ENCODE measurements at regions of chr7 and their contacts with region 1.

Region 1: DNA sequence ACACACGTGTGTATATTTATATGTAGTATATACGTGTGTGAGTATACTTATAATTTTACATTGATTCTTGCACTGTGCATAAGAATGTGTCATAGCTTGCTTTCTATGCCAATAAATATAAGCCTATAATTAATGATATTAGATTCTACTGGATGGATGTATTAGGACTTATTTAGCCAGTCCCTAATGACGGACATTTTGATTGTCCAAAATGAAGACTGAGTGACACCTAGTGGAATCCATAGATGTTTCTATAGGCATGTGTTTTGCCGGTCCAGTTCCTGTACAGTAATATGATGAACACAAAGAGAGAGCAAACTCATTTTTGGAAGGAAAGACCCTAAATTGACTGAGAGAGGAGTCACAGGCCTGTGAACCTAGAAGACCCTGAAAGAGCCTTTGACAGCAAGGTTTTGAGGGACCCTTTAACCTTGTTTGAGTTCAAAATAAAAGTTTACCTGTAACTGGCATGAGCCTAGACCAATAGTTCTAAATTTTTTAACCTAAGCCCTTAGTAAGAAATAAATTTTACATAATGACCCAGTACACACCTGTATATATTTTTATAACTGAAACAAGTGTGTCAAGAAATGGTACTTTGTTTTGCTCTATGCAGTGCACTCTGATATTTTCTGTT is 42.4 kb upstream of the AGBL3 start:
- DNase-seq: peak; percentile 57
- ATAC-seq: peak; percentile 73
- H3K4me3 ChIP-seq: no peak overlapping the region
- H3K27ac ChIP-seq: no peak overlapping the region
- H3K4me1 ChIP-seq: peaks cover 51% of the 10 kb centered on the region
- H3K27me3 ChIP-seq: no peaks in the 10 kb centered on the region
- CTCF ChIP-seq: peak; percentile 69
- EP300 ChIP-seq: no peak
- POLR2A ChIP-seq: no peak
- RAD21 ChIP-seq: peak; percentile 78

Region 2: DNA sequence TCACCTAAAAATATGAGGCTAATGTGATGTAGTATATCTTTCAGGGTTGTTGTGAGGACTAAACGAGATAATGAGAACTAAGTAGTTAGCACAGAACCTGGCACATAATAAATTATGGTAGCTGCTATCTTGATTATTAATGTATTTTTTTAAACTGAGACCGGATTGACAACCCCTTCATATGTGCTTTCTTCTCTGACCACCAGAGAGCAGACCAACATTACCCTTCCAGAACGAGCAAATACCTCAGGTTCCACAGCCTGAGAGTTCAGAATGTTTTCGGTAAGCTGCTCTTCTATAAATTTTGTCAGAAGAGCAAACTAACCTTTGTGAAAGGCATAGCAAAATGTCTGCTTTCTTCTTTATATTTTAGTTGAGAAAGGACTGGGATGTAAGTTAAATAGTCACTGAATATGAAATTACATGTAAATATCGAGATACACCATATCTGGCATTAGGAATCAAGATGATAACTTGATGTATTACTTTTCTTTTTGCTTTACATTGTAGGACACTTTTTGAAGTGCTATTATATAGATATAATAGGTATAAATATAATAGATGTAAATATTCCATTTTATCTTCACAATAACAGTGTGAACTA is 310.8 kb before region 1 on chr7:
- CTCF ChIA-PET with region 1: interaction called, 8 read pairs
- POLR2A ChIA-PET with region 1: no interaction called
- in situ Hi-C with region 1: no loop called
- intact Hi-C with region 1: loop called (anchors 2 kb)
- DNase-seq: peak; percentile 44
- ATAC-seq: peak; percentile 82
- H3K4me3 ChIP-seq: no peak overlapping the region
- H3K27ac ChIP-seq: no peak overlapping the region
- H3K4me1 ChIP-seq: no peaks in the 10 kb centered on the region
- H3K27me3 ChIP-seq: no peaks in the 10 kb centered on the region
- CTCF ChIP-seq: peak; percentile 69
- EP300 ChIP-seq: no peak
- POLR2A ChIP-seq: no peak
- RAD21 ChIP-seq: peak; percentile 52; the same call in 1 of the 2 replicates

Region 3: DNA sequence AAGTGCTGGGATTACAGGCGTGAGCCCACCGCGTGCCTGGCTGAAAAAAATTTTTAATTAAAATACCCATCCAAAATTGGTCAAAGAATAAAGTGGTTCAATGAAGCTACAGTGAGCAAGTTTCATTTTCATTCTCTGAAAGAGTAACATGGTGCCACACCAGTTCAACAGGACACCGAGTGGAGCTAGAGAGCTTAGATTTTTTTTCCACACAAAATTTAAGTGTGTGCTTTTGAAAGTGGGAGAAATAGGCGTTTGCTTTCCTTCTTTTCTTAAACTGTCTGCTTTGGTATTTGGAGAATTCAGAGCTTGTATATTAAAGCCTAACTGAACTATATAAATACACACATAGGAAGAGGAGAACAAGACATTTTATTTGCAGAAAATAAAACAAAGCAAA is 253.9 kb before region 1 on chr7:
- CTCF ChIA-PET with region 1: no interaction called
- POLR2A ChIA-PET with region 1: no interaction called
- in situ Hi-C with region 1: no loop called
- intact Hi-C with region 1: loop called (anchors 2 kb)
- DNase-seq: no peak
- ATAC-seq: peak; percentile 68
- H3K4me3 ChIP-seq: no peak overlapping the region
- H3K27ac ChIP-seq: no peak overlapping the region
- H3K4me1 ChIP-seq: peaks cover 28% of the 10 kb centered on the region
- H3K27me3 ChIP-seq: peaks cover 0 to 3% of the 10 kb centered on the region in 2 experiments; a peak in 2 of 5 replicates
- CTCF ChIP-seq: peak; percentile 46; the same call in 1 of the 2 replicates
- EP300 ChIP-seq: no peak
- POLR2A ChIP-seq: no peak
- RAD21 ChIP-seq: no peak

Region 4: GRCh38 chr7:134724606-134725005 is 219.3 kb before region 1 on chr7:
- CTCF ChIA-PET with region 1: interaction called, 3 read pairs
- POLR2A ChIA-PET with region 1: no interaction called
- in situ Hi-C with region 1: no loop called
- intact Hi-C with region 1: loop called (anchors 10 kb)
- DNase-seq: peak; percentile 10
- ATAC-seq: peak; percentile 82
- H3K4me3 ChIP-seq: no peak overlapping the region
- H3K27ac ChIP-seq: no peak overlapping the region
- H3K4me1 ChIP-seq: peaks cover 11% of the 10 kb centered on the region
- H3K27me3 ChIP-seq: peaks cover 1 to 4% of the 10 kb centered on the region in 2 experiments; a peak in 1 of 5 replicates
- CTCF ChIP-seq: peak; percentile 60
- EP300 ChIP-seq: no peak
- POLR2A ChIP-seq: no peak
- RAD21 ChIP-seq: no peak

Region 5: GRCh38 chr7:134750083-134751062 is 193.5 kb before region 1 on chr7:
- CTCF ChIA-PET with region 1: no interaction called
- POLR2A ChIA-PET with region 1: no interaction called
- in situ Hi-C with region 1: no loop called
- intact Hi-C with region 1: loop called (anchors 5 kb)
- DNase-seq: peak; percentile 27
- ATAC-seq: peak; percentile 94
- H3K4me3 ChIP-seq: no peak overlapping the region
- H3K27ac ChIP-seq: no peak overlapping the region
- H3K4me1 ChIP-seq: no peaks in the 10 kb centered on the region
- H3K27me3 ChIP-seq: no peaks in the 10 kb centered on the region; a peak in 1 of 5 replicates
- CTCF ChIP-seq: peak; percentile 83
- EP300 ChIP-seq: no peak
- POLR2A ChIP-seq: no peak
- RAD21 ChIP-seq: no peak

Region 6: DNA sequence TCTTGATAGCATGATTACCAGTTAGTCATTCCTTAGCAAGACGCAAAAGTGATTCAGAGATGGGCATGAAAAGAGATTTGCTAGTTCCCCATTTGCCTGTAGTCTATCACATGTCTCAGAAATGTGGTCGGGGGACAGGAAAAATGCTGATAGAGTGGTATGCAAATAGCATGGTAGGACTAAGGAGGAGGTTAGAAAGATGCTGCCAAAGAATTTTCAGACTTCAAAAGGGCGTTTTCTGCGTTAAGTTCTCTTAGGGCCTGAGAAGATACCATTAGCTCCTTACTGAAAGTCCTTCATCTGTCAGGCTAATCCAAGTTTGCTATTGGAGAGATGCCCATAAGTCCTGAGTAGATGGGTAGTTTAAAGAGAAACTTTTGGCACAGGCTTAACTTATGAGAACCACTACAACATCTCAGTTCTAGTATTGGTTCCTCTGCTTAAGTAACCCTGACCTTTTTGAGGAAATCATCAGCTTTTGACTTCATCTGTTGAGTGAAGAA is 161.7 kb before region 1 on chr7:
- CTCF ChIA-PET with region 1: no interaction called
- POLR2A ChIA-PET with region 1: no interaction called
- in situ Hi-C with region 1: no loop called
- intact Hi-C with region 1: no loop called
- DNase-seq: no peak
- ATAC-seq: no peak
- H3K4me3 ChIP-seq: no peak overlapping the region
- H3K27ac ChIP-seq: no peak overlapping the region
- H3K4me1 ChIP-seq: peaks cover 15% of the 10 kb centered on the region
- H3K27me3 ChIP-seq: no peaks in the 10 kb centered on the region
- CTCF ChIP-seq: no peak
- EP300 ChIP-seq: no peak
- POLR2A ChIP-seq: no peak
- RAD21 ChIP-seq: no peak

Region 7: GRCh38 chr7:134875867-134876266 is 68.0 kb before region 1 on chr7:
- CTCF ChIA-PET with region 1: no interaction called
- POLR2A ChIA-PET with region 1: no interaction called
- in situ Hi-C with region 1: no loop called
- intact Hi-C with region 1: loop called (anchors 5 kb)
- DNase-seq: no peak
- ATAC-seq: no peak
- H3K4me3 ChIP-seq: no peak overlapping the region
- H3K27ac ChIP-seq: no peak overlapping the region
- H3K4me1 ChIP-seq: no peaks in the 10 kb centered on the region
- H3K27me3 ChIP-seq: no peaks in the 10 kb centered on the region
- CTCF ChIP-seq: no peak
- EP300 ChIP-seq: no peak
- POLR2A ChIP-seq: no peak
- RAD21 ChIP-seq: no peak

Region 8: GRCh38 chr7:134891262-134891695 is 52.6 kb before region 1 on chr7:
- CTCF ChIA-PET with region 1: no interaction called
- POLR2A ChIA-PET with region 1: interaction called, 7 read pairs
- in situ Hi-C with region 1: no loop called
- intact Hi-C with region 1: loop called (anchors 5 kb)
- DNase-seq: peak; percentile 98
- ATAC-seq: peak; percentile 92
- H3K4me3 ChIP-seq: peak overlapping the region; percentile 70 to 85 (median 77); a peak in 5 of 6 replicates
- H3K27ac ChIP-seq: peak overlapping the region; percentile 84
- H3K4me1 ChIP-seq: peaks cover 63% of the 10 kb centered on the region
- H3K27me3 ChIP-seq: no peaks in the 10 kb centered on the region; a peak in 1 of 5 replicates
- CTCF ChIP-seq: no peak
- EP300 ChIP-seq: peak in 1 of 2 experiments; percentile 62; a peak in 1 of 4 replicates
- POLR2A ChIP-seq: peak; percentile 74 to 85; a peak in 3 of 4 replicates
- RAD21 ChIP-seq: peak; percentile 50; the same call in 1 of the 2 replicates